ENCODE measurements at regions of chr20 and their contacts with region 1.

Region 1: DNA sequence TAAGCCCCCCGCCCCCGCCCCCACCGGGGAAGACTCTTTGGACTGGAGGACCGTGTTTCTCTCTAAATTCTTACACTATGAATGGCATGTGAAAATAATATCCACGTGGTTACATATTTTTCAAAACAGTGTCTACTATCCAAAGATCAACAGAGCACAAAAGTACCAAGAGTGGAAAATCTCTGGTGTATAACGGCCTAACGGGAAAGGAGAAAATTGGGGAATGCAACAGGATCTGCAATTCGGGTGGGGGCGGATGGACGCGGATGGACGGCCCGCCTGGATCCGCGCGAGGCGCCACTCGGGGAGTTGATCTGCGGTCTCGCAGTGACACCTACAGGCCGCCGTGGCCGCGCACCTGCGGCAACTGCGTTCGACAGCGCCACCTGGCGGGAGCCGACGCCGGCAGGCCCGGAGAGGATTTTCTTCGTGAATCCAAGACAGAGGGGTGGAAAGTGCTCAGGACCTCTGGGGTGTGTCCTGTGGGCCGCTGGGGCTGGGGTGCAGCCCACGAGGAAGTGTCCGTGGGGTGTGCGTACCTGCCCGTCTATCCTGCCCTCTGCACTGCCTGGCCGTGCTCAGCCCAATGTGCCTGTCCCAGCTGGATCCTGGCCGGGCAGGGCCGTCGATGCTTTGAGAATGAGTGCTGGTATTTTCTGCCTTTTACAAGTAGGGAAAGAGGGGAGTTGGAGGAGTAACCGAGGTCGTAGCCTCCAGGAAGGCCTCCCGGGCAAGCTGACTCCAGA is 18.6 kb downstream of the ANKRD60 start:
- DNase-seq: peak; percentile 51 to 90
- H3K4me3 ChIP-seq: no peak overlapping the region
- H3K4me1 ChIP-seq: no peaks in the 10 kb centered on the region
- H3K27me3 ChIP-seq: peaks cover 5% of the 10 kb centered on the region; the same call in 1 of the 2 replicates

Region 2: DNA sequence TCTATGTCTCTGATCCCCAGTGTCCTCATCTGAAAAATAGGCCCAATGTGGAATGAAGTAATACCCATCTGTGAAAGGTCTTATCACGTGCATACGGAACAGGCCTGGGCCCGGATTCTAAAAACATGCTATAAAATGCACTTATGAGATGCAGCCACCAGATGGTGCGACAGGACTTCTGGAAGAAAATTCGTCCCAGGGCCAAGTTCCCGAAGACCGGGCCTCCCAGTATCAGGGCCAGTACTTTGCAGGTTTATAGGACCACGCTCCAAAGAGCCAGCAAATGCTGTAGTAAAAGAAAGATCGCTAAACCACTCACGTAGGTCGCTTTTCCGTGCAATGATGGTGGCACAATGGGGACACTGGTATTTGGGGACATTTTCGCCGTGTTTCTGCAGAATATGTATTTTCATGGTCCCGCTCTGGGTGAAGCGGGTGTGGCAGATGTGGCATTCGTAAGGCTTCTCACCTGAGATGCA is 695.5 kb before region 1 on chr20:
- in situ Hi-C with region 1: loop called (anchors 5 kb)
- DNase-seq: peak; percentile 39 to 78
- H3K4me3 ChIP-seq: no peak overlapping the region
- H3K4me1 ChIP-seq: no peaks in the 10 kb centered on the region; the same call in 1 of the 2 replicates
- H3K27me3 ChIP-seq: no peaks in the 10 kb centered on the region

Region 3: DNA sequence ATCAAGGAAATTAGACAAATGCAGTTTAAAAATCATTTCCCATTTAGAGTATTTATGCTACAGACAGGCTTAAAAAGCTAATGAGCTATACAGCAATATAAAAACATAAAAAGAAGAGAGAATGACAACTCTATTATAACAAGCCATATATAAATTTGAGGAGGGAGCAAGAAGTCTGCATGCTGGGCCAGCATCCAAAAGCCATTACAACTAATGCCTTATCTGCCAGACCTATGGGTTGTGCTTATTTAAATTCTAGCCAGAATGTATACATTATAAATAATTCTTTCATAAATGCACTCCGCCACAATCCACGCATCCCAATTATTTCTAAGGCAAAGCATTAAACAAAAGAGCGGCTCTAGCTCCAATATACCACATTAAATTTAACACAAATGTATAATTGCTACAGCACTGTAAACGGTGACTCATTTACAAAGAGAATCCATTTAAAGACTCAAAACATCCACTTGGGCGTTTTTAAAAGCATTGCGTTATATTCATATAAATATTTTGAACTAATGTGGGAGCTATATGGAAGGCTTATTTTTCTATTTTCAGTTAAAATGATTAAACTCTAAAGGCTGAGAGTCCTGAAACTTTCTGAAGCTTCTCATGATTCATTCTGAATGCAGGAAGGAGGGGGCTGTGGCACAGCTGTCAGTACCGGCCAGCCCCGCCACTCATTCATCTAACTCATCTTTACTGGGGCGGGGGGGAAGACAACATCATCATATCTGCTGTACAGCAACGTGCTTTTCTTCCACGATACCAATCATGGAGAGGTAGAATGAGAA is 62.0 kb after region 1 on chr20:
- in situ Hi-C with region 1: no loop called
- DNase-seq: no peak
- H3K4me3 ChIP-seq: no peak overlapping the region
- H3K4me1 ChIP-seq: no peaks in the 10 kb centered on the region
- H3K27me3 ChIP-seq: no peaks in the 10 kb centered on the region

Measured in HAP-1 (cell line).